ENCODE measurements at regions of chr3 and their contacts with region 1.

Region 1: GRCh38 chr3:14803101-14803980 is 15.4 kb upstream of the FGD5 start:
- DNase-seq: peak; percentile 58 to 68
- ATAC-seq: peak; percentile 68 to 85
- H3K4me3 ChIP-seq: no peak overlapping the region
- H3K27ac ChIP-seq: peak overlapping the region; percentile 41 to 57; a peak in 4 of 6 replicates
- H3K4me1 ChIP-seq: peaks cover 34% of the 10 kb centered on the region
- CTCF ChIP-seq: no peak
- EP300 ChIP-seq: no peak
- POLR2A ChIP-seq: no peak
- RAD21 ChIP-seq: no peak

Region 2: DNA sequence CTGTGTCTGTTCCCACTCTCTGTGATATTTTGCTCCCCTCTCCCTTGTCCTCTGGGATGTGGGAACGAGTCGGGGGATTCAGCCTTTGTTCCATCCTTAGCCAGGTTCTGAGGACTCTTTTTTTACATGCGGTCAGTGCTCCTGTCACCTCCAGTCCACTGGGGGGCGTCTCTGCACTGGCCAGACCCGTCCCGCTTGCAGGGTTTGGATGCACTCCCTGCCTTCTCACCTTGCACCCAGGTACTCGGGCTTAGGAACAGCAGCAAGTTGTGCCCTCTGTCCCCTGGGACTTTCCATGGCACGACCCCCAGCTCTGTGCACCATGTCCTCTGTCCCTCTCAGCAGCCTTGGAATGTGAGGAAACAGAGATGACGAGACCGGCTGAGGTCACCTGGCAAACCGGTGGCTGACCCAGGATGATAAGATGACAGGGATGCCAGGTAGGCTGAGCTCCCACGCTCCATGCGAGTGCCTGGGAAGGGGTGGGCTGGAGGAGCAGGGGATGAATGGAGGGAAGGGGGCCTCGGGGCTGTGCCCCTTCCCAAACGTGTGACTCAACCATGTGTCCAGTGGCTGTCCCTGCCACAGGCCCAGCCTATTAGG is 11.9 kb before region 1 on chr3:
- CTCF ChIA-PET with region 1: interaction called, 19 read pairs
- POLR2A ChIA-PET with region 1: no interaction called
- DNase-seq: peak; percentile 62 to 76
- ATAC-seq: peak; percentile 73 to 94
- H3K4me3 ChIP-seq: no peak overlapping the region
- H3K27ac ChIP-seq: no peak overlapping the region
- H3K4me1 ChIP-seq: no peaks in the 10 kb centered on the region
- CTCF ChIP-seq: peak; percentile 78
- EP300 ChIP-seq: no peak
- POLR2A ChIP-seq: no peak
- RAD21 ChIP-seq: peak; percentile 81 to 87

Region 3: GRCh38 chr3:14822670-14823390 is 19.5 kb after region 1 on chr3:
- CTCF ChIA-PET with region 1: no interaction called
- POLR2A ChIA-PET with region 1: no interaction called
- DNase-seq: no peak
- ATAC-seq: peak in 1 of 2 experiments; percentile 31; a peak in 2 of 6 replicates
- H3K4me3 ChIP-seq: no peak overlapping the region
- H3K27ac ChIP-seq: no peak overlapping the region
- H3K4me1 ChIP-seq: no peaks in the 10 kb centered on the region
- CTCF ChIP-seq: no peak
- EP300 ChIP-seq: no peak
- POLR2A ChIP-seq: no peak
- RAD21 ChIP-seq: no peak

Measured in A549 (cell line).